T-cell (primary cell): ENCODE measurements at regions of chr2 and their contacts with region 1.

Region 1: GRCh38 chr2:64807417-64807816 is 153.7 kb upstream of the SERTAD2 start:
- DNase-seq: no peak
- ATAC-seq: no peak
- H3K4me3 ChIP-seq: no peak overlapping the region
- H3K4me3 Mint-ChIP-seq: no peak overlapping the region
- H3K27ac ChIP-seq: no peak overlapping the region
- H3K27ac Mint-ChIP-seq: no peak overlapping the region
- H3K4me1 ChIP-seq: peaks cover 0 to 2% of the 10 kb centered on the region in 2 experiments
- H3K4me1 Mint-ChIP-seq: peaks cover 7 to 24% (median 7%) of the 10 kb centered on the region in 3 donors
- H3K27me3 ChIP-seq: no peaks in the 10 kb centered on the region
- H3K27me3 Mint-ChIP-seq: no peaks in the 10 kb centered on the region

Region 2: GRCh38 chr2:64179582-64180321 is 627.7 kb before region 1 on chr2:
- CTCF ChIA-PET with region 1: no interaction called
- POLR2A ChIA-PET with region 1: interaction called in 1 of 2 experiments, 17 read pairs
- DNase-seq: no peak
- ATAC-seq: peak in 1 of 4 experiments; percentile 29
- H3K4me3 ChIP-seq: no peak overlapping the region
- H3K4me3 Mint-ChIP-seq: no peak overlapping the region
- H3K27ac ChIP-seq: no peak overlapping the region
- H3K27ac Mint-ChIP-seq: no peak overlapping the region
- H3K4me1 ChIP-seq: no peaks in the 10 kb centered on the region
- H3K4me1 Mint-ChIP-seq: peaks cover 4 to 6% (median 6%) of the 10 kb centered on the region in 3 donors
- H3K27me3 ChIP-seq: no peaks in the 10 kb centered on the region
- H3K27me3 Mint-ChIP-seq: peaks cover 0 to 3% of the 10 kb centered on the region in 2 donors

Region 3: DNA sequence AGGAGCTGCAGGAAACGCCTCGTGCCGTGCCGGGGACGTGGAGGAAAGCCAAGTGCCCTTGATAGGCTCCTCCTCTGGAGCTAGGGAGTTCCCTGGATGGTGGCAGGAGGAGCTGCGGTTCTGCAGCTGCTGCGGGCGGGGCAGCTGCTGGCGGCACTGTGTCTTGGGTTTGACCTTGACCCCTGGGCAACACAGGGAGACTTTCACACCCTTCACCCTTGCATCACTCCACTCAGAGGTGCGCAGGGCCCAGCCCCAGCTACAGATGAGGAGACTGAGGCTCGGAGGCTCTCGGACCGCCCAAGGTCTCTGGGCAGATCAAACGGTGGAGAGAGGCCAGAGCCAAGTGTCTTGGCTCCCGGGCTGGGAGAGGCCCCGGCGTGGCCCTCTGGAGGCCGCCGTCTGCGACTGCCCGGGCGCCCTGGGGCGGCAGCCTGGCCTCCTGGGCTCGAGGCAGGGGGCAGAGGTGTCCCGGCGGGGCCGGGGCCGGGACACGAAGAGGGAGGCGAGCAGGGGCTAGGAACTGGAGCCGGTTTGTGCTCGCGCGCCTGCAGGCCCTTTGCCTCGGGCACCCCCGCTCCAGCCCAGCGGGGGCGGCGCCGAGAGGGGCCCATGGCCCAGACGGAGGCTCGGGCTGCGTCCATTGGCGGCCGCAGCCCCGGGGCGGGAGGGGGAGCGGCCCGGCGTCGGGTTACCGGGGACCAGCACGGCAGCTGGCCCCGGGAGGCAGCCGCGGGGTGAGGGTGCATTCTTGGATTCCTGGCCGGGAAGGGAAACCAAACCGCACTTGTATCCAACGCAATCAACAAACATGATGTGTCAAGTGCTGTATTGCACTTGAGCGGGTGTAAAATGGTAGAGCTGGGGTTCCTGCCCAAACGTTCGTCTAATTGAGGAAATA is 52.1 kb after region 1 on chr2:
- CTCF ChIA-PET with region 1: no interaction called
- POLR2A ChIA-PET with region 1: no interaction called
- DNase-seq: peak in 3 of 35 experiments; percentile 10 to 23 (median 12)
- ATAC-seq: peak; percentile 31 to 52 (median 37)
- H3K4me3 ChIP-seq: peak overlapping the region in 1 of 2 donors; percentile 40
- H3K4me3 Mint-ChIP-seq: peak overlapping the region; percentile 14 to 56 (median 35)
- H3K27ac ChIP-seq: no peak overlapping the region
- H3K27ac Mint-ChIP-seq: no peak overlapping the region
- H3K4me1 ChIP-seq: peaks cover 0 to 13% of the 10 kb centered on the region in 2 experiments
- H3K4me1 Mint-ChIP-seq: peaks cover 3 to 8% (median 4%) of the 10 kb centered on the region in 3 donors
- H3K27me3 ChIP-seq: peaks cover 0 to 30% of the 10 kb centered on the region in 2 experiments
- H3K27me3 Mint-ChIP-seq: peaks cover 9 to 12% of the 10 kb centered on the region in 2 donors